Endothelial cell of umbilical vein (primary cell): ENCODE measurements at regions of chr4 and their contacts with region 1.

Region 1: DNA sequence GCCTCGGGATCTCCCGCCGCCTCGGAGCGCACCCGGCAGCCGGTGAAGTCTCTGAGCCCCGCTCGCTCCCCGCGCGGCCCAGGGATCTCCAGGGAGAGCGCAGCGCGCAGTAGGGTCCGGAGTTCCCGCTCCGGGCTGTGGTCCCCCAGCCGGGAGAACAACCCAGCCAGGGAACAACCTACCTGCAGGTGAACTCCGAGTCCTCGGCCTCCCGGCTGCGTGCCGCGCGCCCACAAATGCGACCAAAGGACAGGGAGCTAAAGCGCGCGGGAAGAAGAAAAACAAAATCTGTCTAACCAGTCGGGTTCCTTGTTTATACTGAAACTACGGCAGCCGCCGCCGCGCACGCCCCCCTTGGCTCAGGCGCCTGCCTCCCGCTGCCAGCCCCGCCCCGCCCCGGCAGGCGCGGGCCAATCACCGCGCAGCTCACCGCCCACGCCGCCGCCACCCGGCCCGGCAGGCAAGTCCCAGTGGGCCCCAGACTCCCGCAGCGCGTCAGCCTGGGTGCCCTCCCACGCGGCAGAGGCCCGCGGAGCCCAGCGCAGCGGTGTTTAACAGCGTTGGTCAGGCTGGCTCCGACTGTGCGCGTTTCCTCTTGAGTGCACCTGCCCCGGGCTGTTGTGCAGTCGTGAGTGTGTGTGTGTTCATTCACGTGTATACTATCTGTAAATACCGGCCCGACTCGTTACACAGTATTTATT is at the start of gene RASGEF1B:
- DNase-seq: peak; percentile 77
- H3K4me3 ChIP-seq: peak within 1 kb of the TSS; percentile 42 to 77 (median 66)
- H3K27ac ChIP-seq: no peak within 1 kb of the TSS
- H3K4me1 ChIP-seq: peaks cover 9% of the 10 kb centered on the region
- H3K27me3 ChIP-seq: peaks cover 22 to 26% of the 10 kb centered on the region in 2 experiments
- CTCF ChIP-seq: no peak
- POLR2A ChIP-seq: no peak
- total RNA-seq, gene RASGEF1B: not detected in 2 replicates

Region 2: GRCh38 chr4:81747242-81747930 is 275.6 kb after region 1 on chr4:
- CTCF ChIA-PET with region 1: no interaction called
- POLR2A ChIA-PET with region 1: no interaction called
- dilution Hi-C with region 1: no loop called
- intact Hi-C with region 1: loop called (anchors 10 kb)
- DNase-seq: peak; percentile 74
- H3K4me3 ChIP-seq: no peak overlapping the region
- H3K27ac ChIP-seq: peak overlapping the region; percentile 1
- H3K4me1 ChIP-seq: peaks cover 17% of the 10 kb centered on the region
- H3K27me3 ChIP-seq: no peaks in the 10 kb centered on the region
- CTCF ChIP-seq: no peak
- POLR2A ChIP-seq: no peak

Region 3: DNA sequence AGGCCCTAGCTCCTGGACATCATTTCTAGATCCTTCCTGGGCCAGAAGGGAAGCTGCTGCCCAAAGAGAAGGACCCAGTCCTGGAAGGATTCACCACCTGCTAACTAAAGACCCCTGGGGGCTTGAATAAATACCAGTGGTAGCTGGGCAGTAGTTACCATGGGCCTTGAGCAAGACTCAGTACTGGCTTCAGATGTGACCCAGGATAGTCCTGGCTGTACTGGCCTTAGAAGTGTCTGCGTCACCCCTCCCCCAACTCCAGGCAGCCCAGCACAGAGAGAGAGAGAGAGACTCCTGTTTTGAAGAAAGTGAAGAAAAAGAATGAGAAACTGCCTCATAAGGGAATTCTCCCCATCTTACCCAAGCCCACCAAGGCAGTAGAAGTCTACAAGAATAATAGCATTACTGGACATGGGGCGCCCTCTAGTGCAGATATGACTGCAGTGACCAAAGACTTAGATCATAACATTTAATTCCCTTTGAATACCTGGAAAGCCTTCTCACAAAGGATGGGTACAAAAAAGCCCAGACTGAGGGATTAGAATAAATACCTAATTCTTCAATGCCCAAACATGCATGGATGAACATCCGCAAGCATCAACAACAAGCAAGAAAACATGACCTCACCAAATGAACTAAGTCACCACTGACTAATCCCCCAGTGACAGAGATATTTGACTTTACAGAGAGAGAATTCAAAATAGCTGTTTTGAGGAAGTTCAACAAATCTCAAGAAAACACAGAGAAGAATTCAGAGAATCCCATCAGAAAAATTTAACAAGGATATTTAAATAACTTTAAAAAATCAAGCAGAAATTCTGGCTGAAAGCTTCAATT is 730.3 kb after region 1 on chr4:
- CTCF ChIA-PET with region 1: interaction called, 42 read pairs
- POLR2A ChIA-PET with region 1: no interaction called
- dilution Hi-C with region 1: no loop called
- intact Hi-C with region 1: loop called (anchors 1 kb)
- DNase-seq: peak; percentile 59
- H3K4me3 ChIP-seq: no peak overlapping the region
- H3K27ac ChIP-seq: no peak overlapping the region
- H3K4me1 ChIP-seq: no peaks in the 10 kb centered on the region
- H3K27me3 ChIP-seq: no peaks in the 10 kb centered on the region
- CTCF ChIP-seq: peak; percentile 56 to 58
- POLR2A ChIP-seq: no peak

Region 4: DNA sequence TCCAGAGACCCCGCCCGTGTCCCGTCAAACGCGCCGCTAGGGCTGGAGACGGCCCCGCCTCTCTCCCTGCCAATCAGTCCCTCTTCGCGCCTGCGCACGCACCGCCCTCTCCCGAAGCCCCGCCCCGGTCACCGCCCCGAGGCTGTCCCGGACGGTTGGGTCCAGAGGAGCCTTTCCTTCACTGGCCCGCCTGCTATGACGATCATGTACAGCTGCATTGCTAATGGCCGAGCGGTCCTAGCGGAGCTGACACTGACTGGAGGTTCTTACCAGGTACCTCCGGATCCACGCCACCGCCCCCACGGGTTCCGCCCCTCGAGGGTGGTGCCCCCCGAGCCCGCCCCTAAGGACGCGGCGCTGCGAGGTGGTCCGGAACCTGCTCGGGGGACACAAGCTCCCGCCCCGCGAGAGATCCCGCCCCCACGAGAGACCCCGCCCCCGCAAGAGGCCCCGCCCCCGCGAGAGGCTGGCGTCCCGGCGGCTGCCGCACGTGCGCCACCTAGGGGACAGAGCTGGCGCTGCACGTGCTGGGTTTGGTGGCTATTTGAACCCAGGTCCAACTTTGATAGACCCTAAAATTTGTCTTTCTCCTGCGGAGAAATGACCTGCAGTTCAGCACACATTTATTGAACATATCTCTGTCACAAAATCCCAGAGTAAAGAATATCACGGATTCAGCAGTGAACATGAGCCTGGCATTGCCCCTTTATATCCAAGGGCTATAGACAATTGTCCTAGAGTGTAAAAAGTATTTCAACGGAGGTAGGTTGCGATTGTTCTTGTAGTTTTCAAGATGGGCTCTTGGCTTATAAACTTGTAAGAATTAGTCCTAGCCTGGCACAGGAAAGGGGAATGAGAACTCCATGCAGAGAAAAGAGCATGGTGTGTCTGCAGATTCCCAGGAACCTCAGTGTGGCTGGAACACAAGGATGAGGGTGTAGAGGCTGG is 813.4 kb after region 1 on chr4:
- CTCF ChIA-PET with region 1: interaction called, 14 read pairs
- POLR2A ChIA-PET with region 1: no interaction called
- dilution Hi-C with region 1: no loop called
- intact Hi-C with region 1: no loop called
- DNase-seq: peak; percentile 99
- H3K4me3 ChIP-seq: peak overlapping the region in 2 of 3 experiments; percentile 40 to 44
- H3K27ac ChIP-seq: no peak overlapping the region
- H3K4me1 ChIP-seq: peaks cover 6% of the 10 kb centered on the region
- H3K27me3 ChIP-seq: peaks cover 13 to 16% of the 10 kb centered on the region in 2 experiments
- CTCF ChIP-seq: peak; percentile 69 to 90
- POLR2A ChIP-seq: no peak